Activated CD8-positive, alpha-beta T cell treated with anti-CD3 and anti-CD28 coated beads for 36 hours (primary cell): ENCODE measurements at regions of chr3 and their contacts with region 1.

Region 1: DNA sequence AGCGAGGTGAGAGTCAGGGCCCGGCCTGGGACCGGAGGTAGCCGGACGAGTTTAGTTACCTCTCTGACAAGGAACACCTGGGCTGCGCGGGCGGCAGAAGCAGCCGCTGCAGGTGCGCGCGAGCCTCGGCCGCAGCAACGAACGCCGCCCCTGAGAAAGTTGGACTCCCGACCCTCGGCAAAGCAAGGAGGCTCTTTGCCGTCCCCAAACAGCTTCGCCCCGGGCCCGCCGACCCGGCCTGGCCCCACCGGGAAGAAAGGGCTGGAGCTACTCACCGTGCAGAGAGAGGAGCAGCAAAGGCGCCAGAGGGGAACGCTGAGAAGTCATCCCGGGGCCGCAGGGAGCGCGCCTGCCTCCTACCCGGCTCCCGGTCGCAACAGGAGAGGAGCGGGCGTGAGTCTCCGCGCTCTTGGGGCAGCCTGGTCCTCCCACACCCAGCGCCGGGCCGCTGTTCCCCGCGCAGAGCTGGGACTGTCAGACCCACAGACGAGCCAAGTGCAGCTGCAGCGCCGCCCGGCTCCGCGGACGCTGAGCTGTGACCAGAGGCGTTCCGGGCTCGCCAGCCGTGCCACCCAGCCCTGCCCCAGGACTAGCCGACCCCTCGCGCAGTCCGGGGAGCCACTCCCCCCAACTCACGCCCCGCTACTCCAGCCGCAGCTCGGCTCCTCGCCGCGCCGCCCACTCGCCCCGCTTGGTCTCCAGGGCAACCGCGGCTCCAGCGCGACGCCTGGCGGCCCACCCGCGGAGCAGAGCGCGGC is at the start of gene IGSF11:
- DNase-seq: peak; percentile 71
- ATAC-seq: peak; percentile 91
- H3K4me3 Mint-ChIP-seq: peak within 1 kb of the TSS; percentile 79
- H3K27ac Mint-ChIP-seq: no peak within 1 kb of the TSS
- H3K4me1 Mint-ChIP-seq: peaks cover 12% of the 10 kb centered on the region
- H3K27me3 Mint-ChIP-seq: peaks cover 44% of the 10 kb centered on the region
- CTCF ChIP-seq: peak; percentile 73
- total RNA-seq, gene IGSF11: 0.07 TPM in 1 of 2 experiments, not detected in the other

Region 2: DNA sequence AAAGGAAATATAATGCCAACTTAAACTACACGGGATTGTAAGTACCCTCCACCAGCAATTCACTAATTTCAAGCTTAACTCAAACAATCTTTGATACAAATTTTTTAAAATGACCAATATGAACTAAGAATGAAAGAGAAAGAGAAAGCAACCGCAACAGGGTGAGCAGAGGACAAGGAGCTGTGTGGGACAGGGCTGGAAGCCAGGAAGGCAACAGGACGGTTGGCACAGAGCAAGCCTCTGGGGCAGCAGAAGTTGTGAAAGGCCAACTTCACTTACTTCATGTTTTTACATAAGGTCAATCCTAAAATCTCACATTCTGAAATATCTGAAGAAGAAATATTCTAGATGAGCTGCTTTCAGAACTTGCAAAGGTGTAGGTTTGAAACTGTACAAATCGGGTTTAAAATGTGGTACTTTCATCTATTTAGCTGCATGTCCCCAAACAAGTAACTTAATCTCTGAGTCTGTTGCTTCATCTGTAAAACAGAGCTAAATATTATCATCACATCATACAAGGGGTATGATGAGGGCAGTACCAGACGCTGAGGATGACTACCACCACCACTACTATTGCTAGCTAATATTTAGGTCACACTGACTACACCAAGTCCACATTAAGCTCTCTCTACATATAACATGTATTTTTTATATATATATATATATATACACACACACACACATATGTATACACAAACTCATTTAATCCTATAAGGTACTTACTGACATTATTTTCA is 101.4 kb before region 1 on chr3:
- CTCF ChIA-PET with region 1: interaction called, 10 read pairs
- POLR2A ChIA-PET with region 1: no interaction called
- intact Hi-C with region 1: no loop called
- DNase-seq: no peak
- ATAC-seq: no peak
- H3K4me3 Mint-ChIP-seq: no peak overlapping the region
- H3K27ac Mint-ChIP-seq: no peak overlapping the region
- H3K4me1 Mint-ChIP-seq: peaks cover 6% of the 10 kb centered on the region
- H3K27me3 Mint-ChIP-seq: no peaks in the 10 kb centered on the region
- CTCF ChIP-seq: no peak

Region 3: DNA sequence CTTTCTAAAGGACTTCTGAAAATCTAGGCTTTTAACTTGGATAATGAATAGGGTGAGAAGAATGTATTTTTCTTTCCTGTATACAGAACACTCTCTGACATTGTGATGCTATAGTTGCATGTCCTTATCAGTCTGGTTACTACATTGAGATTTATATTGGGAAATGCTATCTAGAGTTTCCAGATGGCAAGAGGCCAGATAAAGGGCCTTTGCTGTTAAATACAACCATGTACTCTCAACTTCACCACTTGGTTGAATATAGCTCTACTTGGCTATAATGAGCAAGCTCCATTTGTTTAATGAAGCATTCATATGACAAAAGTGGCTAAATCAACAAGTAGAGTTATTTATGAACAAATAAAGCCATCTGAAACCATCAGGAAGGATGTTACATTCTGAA is 90.8 kb before region 1 on chr3:
- CTCF ChIA-PET with region 1: interaction called, 4 read pairs
- POLR2A ChIA-PET with region 1: interaction called, 3 read pairs
- intact Hi-C with region 1: loop called (anchors 10 kb)
- DNase-seq: no peak
- ATAC-seq: no peak
- H3K4me3 Mint-ChIP-seq: no peak overlapping the region
- H3K27ac Mint-ChIP-seq: no peak overlapping the region
- H3K4me1 Mint-ChIP-seq: peaks cover 50% of the 10 kb centered on the region
- H3K27me3 Mint-ChIP-seq: no peaks in the 10 kb centered on the region
- CTCF ChIP-seq: no peak

Region 4: DNA sequence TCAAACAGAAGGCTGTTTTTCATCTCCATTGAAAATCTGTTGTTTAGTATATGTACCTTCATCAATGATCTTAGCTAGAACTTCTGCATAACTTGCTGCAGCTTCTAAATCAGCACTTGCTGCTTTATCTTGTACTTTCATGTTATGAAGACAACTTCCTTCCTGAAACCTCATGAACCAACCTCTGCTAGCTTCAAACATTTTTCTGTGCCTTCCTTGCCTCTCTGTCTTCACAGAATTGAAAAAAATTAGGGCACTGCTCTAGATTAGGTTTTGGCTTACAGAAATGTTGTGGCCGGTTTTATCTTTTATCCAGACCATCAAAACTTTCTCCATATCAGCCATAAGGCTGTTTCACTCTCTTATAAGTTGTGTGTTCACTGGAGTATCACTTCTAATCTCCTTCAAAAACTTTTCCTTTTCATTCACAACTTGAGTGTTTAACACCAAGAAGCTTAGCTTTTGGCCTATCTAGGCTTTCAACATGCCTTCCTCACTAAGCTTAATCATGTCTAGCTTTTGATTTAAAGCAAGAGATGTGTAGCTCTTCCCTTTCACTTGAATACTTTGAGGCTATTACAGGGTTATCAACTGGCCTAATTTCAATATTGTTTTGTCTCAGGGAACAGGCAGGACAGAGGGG is 78.4 kb before region 1 on chr3:
- CTCF ChIA-PET with region 1: interaction called, 10 read pairs
- POLR2A ChIA-PET with region 1: interaction called, 3 read pairs
- intact Hi-C with region 1: no loop called
- DNase-seq: no peak
- ATAC-seq: peak; percentile 50
- H3K4me3 Mint-ChIP-seq: no peak overlapping the region
- H3K27ac Mint-ChIP-seq: peak overlapping the region; percentile 55
- H3K4me1 Mint-ChIP-seq: peaks cover 36% of the 10 kb centered on the region
- H3K27me3 Mint-ChIP-seq: no peaks in the 10 kb centered on the region
- CTCF ChIP-seq: no peak

Region 5: DNA sequence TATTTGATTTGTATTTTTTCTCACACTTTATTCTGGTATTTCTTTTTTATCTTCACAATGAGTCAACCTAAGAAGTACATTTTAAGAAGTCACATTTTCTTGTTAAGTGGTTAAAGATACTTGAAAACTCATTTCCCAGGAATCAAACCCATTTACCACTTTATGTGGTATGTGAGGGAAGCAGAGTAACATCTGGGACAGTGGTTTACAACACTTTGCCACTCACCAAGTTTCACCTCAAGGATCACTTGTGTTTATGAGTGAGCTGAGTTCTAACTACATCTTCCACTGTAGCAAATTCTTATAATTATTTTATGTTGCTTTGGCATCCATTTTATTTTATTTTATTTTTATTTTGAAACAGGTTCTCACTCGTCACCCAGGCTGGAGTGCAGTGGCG is 53.6 kb before region 1 on chr3:
- CTCF ChIA-PET with region 1: interaction called, 14 read pairs
- POLR2A ChIA-PET with region 1: interaction called, 3 read pairs
- intact Hi-C with region 1: no loop called
- DNase-seq: peak; percentile 18
- ATAC-seq: peak; percentile 66
- H3K4me3 Mint-ChIP-seq: no peak overlapping the region
- H3K27ac Mint-ChIP-seq: no peak overlapping the region
- H3K4me1 Mint-ChIP-seq: peaks cover 28% of the 10 kb centered on the region
- H3K27me3 Mint-ChIP-seq: no peaks in the 10 kb centered on the region
- CTCF ChIP-seq: no peak

Region 6: DNA sequence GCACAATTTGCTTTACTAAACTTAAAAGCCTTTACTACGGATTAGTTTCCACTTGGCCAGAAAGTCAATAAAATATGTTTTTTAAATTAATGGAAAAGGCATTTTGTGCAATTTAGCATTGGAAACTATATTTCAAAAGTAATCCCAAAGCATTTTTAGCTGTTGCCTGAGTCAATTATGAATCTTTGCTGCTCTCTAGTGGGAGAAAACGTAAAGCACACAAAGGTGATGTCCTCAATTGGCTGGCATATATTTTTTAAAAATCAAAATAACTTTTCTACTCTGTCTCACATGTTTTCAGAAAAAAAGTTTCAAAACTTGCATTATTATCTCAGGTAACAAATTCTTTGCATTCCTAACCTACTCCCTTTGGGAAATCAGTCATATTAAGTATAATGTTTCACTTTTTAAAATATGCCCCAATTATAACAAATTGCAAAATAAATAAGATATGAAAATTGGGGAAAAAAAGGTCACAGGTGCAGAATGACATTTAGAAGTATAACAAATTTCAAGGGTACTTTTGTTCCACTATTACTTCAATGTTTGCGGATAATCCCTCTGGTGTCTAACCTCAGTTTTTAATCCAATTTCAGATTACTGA is 64.3 kb after region 1 on chr3:
- CTCF ChIA-PET with region 1: interaction called, 22 read pairs
- POLR2A ChIA-PET with region 1: no interaction called
- intact Hi-C with region 1: loop called (anchors 5 kb)
- DNase-seq: peak; percentile 3
- ATAC-seq: no peak
- H3K4me3 Mint-ChIP-seq: no peak overlapping the region
- H3K27ac Mint-ChIP-seq: no peak overlapping the region
- H3K4me1 Mint-ChIP-seq: no peaks in the 10 kb centered on the region
- H3K27me3 Mint-ChIP-seq: peaks cover 2% of the 10 kb centered on the region
- CTCF ChIP-seq: peak; percentile 89

Region 7: DNA sequence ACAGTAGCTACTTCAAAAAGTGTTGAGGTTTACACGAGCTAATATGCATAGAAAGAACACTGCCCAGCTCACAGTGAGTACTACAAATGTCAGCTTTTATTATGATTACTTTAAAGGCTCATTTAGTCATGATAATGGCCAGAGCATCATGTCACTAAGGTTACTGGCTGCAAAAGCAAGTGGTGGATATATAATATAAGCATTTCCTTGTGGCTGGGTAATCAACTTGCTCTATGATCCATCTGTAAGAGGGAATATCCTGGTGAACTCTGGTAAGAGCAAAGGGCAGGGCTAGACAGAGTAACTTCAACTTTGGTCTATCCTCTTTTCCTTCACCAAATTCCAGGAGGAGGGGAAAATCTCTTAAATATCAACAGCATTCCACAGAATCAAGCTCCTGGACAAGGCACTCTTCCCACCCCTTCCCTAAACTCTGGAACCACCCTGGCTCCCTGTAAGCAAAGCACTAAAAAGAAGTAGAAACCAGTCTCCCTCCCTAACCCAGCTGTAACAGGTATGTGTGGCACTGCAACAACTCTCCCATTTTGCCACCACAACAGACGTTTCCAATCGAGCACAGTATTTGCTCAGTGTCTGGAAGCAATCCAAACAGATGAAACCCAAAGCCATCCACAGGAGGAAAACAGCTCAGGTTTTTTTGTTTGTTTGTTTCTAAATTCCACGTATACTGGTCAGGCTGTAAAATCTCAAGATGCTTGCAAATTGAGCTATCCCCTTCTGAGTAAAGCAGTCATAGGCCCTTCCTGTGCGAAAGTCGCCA is 192.8 kb after region 1 on chr3:
- CTCF ChIA-PET with region 1: no interaction called
- POLR2A ChIA-PET with region 1: no interaction called
- intact Hi-C with region 1: no loop called
- DNase-seq: no peak
- ATAC-seq: no peak
- H3K4me3 Mint-ChIP-seq: no peak overlapping the region
- H3K27ac Mint-ChIP-seq: no peak overlapping the region
- H3K4me1 Mint-ChIP-seq: peaks cover 14% of the 10 kb centered on the region
- H3K27me3 Mint-ChIP-seq: no peaks in the 10 kb centered on the region
- CTCF ChIP-seq: no peak

Region 8: DNA sequence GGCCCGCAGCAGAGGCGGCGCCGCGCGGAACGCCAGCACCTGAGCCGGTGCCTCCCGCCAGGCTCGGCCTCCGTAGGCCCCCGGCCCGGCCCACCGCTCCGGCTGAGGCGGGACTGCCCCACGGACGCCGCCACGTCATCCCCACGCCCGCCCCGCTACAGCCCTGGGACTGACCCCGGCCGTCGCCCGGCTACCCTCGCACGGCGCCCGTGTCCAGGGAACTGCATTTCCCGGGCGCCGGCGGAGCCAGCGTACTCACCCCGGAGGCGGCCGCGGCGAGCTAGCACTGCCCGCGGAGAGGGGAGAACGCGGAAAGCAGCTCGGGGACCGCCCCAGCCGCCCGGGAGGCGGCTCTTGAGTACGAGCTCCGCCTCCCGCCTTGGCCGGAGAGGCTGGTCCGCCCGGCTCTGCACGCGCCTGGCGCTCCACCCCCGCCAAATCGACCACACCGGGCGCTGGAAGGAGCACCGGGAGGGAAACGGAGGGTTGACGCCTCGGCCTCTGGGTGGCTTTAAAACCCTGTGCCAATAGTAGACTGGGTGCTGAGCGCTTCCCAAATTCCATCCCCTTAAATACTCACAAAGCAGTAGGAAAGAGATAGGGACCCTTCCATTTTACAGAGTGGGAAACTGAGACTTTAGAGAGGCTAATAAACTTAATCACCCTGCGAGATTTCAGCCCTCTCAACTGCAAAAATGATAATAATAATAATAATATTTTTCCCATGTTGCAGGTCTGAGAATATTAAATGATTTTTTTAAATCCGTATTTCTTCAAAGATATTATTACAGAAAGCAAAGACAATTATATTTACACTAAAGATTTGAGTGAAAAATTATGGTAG is 206.4 kb after region 1 on chr3 and contains the start of gene B4GALT4:
- CTCF ChIA-PET with region 1: interaction called, 15 read pairs
- POLR2A ChIA-PET with region 1: no interaction called
- intact Hi-C with region 1: no loop called
- DNase-seq: peak; percentile 81
- ATAC-seq: peak; percentile 78
- H3K4me3 Mint-ChIP-seq: peak within 1 kb of the TSS; percentile 83
- H3K27ac Mint-ChIP-seq: peak within 1 kb of the TSS; percentile 99
- H3K4me1 Mint-ChIP-seq: peaks cover 36% of the 10 kb centered on the region
- H3K27me3 Mint-ChIP-seq: no peaks in the 10 kb centered on the region
- CTCF ChIP-seq: no peak
- total RNA-seq, gene B4GALT4: 13.3 to 15.2 TPM